ENCODE measurements at regions of chr10 and their contacts with region 1.

Region 1: DNA sequence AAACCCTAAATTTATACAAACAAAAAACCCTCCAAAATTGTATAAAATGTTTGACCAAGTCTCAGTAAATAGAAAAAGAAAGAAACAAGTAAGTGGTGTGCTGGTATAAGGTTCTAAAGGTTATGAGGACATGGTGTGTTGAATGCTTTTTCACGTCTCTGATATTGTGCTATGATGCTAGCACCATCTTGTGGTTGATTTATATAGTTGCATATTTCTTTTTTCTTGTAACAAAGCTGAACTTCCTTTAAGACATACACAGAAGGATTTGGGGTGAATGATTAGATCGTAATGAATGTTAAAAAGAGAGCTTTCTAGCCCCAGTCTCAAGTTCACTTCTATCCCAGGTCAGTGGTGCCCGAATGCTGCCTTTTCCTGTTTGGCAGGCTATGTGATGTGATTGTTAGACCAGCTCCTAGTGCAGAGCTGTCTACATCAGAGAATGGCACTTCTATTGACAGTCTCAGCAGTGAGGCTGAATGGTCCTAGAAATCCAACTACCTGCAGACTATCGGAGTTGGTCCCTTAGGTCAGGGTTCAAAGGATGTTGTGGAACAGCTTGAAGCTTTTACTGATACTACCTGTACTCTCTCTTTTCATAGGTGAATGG is 25.0 kb downstream of the VTI1A start:
- DNase-seq: no peak
- ATAC-seq: peak in 6 of 8 donors; percentile 56 to 73 (median 61)
- H3K4me3 ChIP-seq: no peak overlapping the region
- H3K27ac ChIP-seq: no peak overlapping the region
- H3K4me1 ChIP-seq: peaks cover 0 to 8% (median 0%) of the 10 kb centered on the region in 9 donors
- H3K27me3 ChIP-seq: no peaks in the 10 kb centered on the region
- CTCF ChIP-seq: peak; percentile 55 to 81 (median 76)

Region 2: DNA sequence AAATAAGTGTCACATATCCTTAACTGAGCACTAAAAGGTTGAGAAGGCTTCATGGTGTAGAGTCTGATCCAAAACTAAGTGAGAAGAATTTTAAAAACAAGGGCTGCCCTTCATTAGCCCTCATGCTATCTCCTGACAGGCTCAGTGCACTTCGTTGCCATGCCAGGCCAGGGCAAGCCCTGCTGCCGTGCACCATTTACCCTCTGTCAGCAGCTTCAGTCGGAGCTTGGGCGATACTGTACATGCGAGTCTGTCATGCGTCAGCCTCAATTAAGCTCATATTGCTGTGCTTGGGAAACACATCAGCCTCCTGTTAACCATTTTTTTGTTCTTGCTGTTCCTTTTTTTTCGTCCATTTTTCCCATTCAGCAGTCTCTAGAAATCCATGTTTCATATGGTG is 141.6 kb after region 1 on chr10:
- intact Hi-C with region 1: no loop called
- DNase-seq: peak; percentile 13 to 19
- ATAC-seq: peak; percentile 46 to 91 (median 86)
- H3K4me3 ChIP-seq: no peak overlapping the region
- H3K27ac ChIP-seq: no peak overlapping the region
- H3K4me1 ChIP-seq: no peaks in the 10 kb centered on the region
- H3K27me3 ChIP-seq: no peaks in the 10 kb centered on the region
- CTCF ChIP-seq: no peak

Region 3: DNA sequence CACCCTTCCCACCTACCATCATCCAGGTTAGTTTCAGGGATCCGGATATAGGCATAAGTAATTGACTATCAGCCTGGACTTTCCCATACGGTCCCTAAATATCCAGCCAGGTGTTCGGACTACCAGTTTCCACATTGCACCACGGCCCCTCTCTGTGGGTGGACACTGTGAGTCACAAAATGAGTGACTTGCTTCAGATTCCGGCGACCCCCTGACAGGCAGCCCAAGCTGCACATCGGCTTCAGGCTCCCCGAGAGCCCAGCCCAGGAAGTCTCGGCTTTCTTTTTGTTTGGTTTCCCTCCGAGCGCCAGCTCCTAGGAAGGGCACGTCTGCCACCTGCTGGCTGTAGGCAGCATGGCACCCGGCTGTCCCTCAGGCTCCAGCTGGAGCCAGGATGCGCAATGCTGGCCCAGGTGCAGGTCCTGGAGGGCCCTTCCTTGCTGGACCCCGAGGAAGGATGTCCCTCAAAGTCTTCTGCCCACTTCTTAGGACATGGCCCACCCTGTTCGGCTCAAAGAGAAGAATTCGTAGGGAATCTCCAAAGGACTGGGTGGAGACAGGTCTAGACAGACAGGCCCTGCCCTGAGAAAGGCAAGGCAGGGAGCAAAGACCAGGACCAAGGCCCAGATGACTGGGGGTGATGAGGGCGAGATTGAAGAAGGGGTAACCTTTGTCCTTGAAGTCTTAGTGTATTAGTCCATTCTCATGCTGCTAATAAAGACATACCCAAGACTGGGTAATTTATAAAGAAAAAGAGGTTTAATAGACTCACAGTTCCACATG is 1091.5 kb after region 1 on chr10:
- intact Hi-C with region 1: loop called in 1 of 10 experiments (anchors 10 kb)
- DNase-seq: peak; percentile 55 to 79
- ATAC-seq: peak; percentile 76 to 92 (median 86)
- H3K4me3 ChIP-seq: peak overlapping the region in 8 of 10 donors; percentile 21 to 55 (median 46)
- H3K27ac ChIP-seq: no peak overlapping the region
- H3K4me1 ChIP-seq: peaks cover 0 to 5% (median 0%) of the 10 kb centered on the region in 9 donors
- H3K27me3 ChIP-seq: peaks cover 0 to 15% (median 5%) of the 10 kb centered on the region in 7 donors
- CTCF ChIP-seq: peak; percentile 92 to 99 (median 98)